ENCODE measurements at regions of chr3 and their contacts with region 1.

Region 1: DNA sequence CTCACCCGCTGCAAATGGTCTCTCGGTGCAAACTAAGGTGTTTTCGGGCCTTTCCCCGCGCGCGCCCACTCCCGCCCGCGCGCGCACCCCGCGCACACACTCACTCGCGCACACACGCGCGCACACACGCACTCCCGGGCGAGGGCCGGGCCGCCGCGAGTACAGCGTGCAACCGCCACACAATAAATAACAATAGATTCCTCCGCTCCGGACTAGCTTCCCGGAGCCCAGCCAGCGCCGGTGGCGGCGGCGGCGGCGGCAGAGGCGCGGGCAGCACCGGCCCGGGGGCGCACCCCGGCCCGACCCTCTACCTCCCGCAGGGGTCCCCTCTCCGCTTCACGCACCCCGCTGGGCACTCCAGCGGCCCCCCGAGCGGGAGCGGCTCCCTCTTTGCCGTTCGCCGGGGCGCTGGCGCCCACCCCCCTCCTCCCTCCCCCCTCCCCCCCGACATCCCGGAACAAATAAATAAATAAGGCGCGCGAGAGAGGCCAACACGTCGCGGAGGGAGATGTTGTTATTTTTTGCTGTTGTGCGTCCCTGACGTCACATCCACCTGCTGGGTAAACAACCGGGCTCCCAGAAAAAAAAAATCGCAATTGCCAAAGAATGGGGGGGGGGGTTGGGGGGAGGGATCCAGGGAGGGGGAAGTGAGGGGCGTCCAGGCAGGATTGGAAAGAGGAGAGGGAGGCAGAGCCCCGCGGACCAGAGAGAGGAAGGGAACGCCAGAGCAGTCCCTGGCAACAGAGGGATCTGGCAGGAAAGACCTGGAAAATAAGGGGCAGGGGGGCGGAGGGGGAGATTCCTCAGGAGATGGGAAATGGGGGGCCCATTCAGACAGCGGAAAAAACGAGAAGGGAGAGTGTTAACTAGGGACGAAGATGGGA is at the start of gene FOXP1:
- DNase-seq: peak; percentile 59 to 63
- H3K4me3 ChIP-seq: peak within 1 kb of the TSS; percentile 85
- H3K27ac ChIP-seq: peak within 1 kb of the TSS; percentile 55
- H3K4me1 ChIP-seq: peaks cover 30% of the 10 kb centered on the region
- H3K27me3 ChIP-seq: no peaks in the 10 kb centered on the region
- CTCF ChIP-seq: no peak
- total RNA-seq, gene FOXP1: 31.7 and 33.3 TPM in 2 replicates

Region 2: GRCh38 chr3:70550723-70551319 is 1033.0 kb before region 1 on chr3:
- CTCF ChIA-PET with region 1: no interaction called
- POLR2A ChIA-PET with region 1: no interaction called
- intact Hi-C with region 1: loop called (anchors 5 kb)
- DNase-seq: peak in 1 of 2 experiments; percentile 27
- H3K4me3 ChIP-seq: no peak overlapping the region
- H3K27ac ChIP-seq: no peak overlapping the region
- H3K4me1 ChIP-seq: no peaks in the 10 kb centered on the region
- H3K27me3 ChIP-seq: peaks cover 5% of the 10 kb centered on the region; the same call in 1 of the 2 replicates
- CTCF ChIP-seq: peak; percentile 61

Region 3: GRCh38 chr3:71069797-71070196 is 514.0 kb before region 1 on chr3:
- CTCF ChIA-PET with region 1: no interaction called
- POLR2A ChIA-PET with region 1: no interaction called
- intact Hi-C with region 1: loop called (anchors 5 kb)
- DNase-seq: peak in 1 of 2 experiments; percentile 20
- H3K4me3 ChIP-seq: no peak overlapping the region
- H3K27ac ChIP-seq: no peak overlapping the region
- H3K4me1 ChIP-seq: no peaks in the 10 kb centered on the region
- H3K27me3 ChIP-seq: no peaks in the 10 kb centered on the region
- CTCF ChIP-seq: peak; percentile 46

Region 4: GRCh38 chr3:71201939-71202338 is 381.9 kb before region 1 on chr3:
- CTCF ChIA-PET with region 1: no interaction called
- POLR2A ChIA-PET with region 1: no interaction called
- intact Hi-C with region 1: loop called (anchors 10 kb)
- DNase-seq: no peak
- H3K4me3 ChIP-seq: no peak overlapping the region
- H3K27ac ChIP-seq: no peak overlapping the region
- H3K4me1 ChIP-seq: no peaks in the 10 kb centered on the region
- H3K27me3 ChIP-seq: no peaks in the 10 kb centered on the region
- CTCF ChIP-seq: no peak

Region 5: GRCh38 chr3:71345429-71346040 is 238.3 kb before region 1 on chr3:
- CTCF ChIA-PET with region 1: no interaction called
- POLR2A ChIA-PET with region 1: no interaction called
- intact Hi-C with region 1: loop called (anchors 10 kb)
- DNase-seq: no peak
- H3K4me3 ChIP-seq: no peak overlapping the region
- H3K27ac ChIP-seq: no peak overlapping the region
- H3K4me1 ChIP-seq: no peaks in the 10 kb centered on the region
- H3K27me3 ChIP-seq: no peaks in the 10 kb centered on the region
- CTCF ChIP-seq: no peak

Region 6: DNA sequence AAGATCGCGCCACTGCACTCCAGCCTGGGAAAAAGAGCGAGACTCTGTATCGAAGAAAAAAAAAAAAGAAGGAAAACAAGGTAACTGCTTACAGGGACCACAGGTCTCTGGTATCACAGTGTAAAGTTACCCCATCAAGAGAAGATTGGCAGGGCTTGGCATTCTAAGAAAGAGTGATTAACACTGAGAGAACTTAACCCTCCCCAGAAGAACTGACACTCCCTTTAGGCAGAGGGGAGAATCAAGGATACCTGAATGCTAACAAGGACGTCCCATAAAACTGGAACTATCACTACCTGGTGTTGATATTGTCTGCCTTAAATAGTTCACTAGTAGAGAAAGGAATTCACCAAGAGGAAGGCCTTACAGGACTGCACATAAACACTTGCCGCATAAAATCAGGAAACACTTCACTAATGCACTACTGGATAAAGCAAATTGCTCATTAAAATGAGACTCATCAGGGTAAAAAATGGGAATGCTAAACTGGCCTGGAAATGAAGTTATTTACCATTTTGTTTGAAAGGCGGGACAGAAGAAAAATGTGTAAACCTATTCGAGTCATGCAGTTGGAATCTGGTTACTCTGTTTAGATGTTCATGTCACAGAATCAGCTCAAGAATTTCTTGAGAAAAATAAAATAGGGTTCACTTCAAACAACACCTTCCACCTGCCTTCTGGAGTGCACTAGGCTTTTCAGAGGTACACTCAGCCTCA is 121.9 kb before region 1 on chr3:
- CTCF ChIA-PET with region 1: no interaction called
- POLR2A ChIA-PET with region 1: no interaction called
- intact Hi-C with region 1: loop called (anchors 2 kb)
- DNase-seq: peak; percentile 31 to 74
- H3K4me3 ChIP-seq: no peak overlapping the region; the same call in 1 of the 2 replicates
- H3K27ac ChIP-seq: peak overlapping the region; percentile 77
- H3K4me1 ChIP-seq: peaks cover 31% of the 10 kb centered on the region
- H3K27me3 ChIP-seq: no peaks in the 10 kb centered on the region
- CTCF ChIP-seq: no peak

Region 7: GRCh38 chr3:71537211-71537611 is 46.6 kb before region 1 on chr3:
- CTCF ChIA-PET with region 1: no interaction called
- POLR2A ChIA-PET with region 1: no interaction called
- intact Hi-C with region 1: loop called (anchors 2 kb)
- DNase-seq: peak in 1 of 2 experiments; percentile 54
- H3K4me3 ChIP-seq: no peak overlapping the region
- H3K27ac ChIP-seq: no peak overlapping the region
- H3K4me1 ChIP-seq: peaks cover 14% of the 10 kb centered on the region; the same call in 1 of the 2 replicates
- H3K27me3 ChIP-seq: no peaks in the 10 kb centered on the region
- CTCF ChIP-seq: no peak